ENCODE measurements at regions of chr18 and their contacts with region 1.

Region 1: DNA sequence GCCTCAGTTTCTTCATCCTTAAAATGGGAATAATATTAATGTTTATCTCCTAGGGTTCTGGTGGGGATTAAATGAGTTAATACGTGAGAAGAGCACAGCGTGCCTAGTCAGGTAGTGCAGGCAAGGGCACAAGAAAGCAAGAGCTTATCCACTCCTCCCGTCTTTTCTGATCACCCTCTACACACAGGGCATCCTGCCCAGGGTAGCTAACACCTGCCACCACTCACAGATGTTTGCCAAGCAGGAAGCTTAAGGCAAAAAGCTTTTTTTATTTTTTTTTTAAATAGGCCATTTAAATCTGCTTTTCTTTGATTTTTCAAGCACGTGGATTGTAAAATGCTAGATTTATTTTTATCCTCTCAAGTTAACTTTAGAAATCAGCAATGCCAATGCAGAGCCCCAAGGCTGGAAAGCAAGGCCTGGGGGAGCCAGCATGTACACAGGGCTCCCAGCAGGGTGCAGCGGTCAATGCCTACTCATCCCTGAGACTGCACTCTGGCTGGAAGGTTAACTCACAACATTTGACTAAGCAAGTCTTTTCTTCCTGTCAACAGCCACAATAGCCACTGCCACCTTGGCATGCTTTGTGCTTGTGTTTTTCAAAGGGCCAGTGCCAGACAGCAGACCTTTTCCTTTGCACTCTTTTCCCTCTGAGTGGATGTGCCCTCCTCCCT is 86.5 kb upstream of the ACAA2 start:
- DNase-seq: no peak

Region 2: DNA sequence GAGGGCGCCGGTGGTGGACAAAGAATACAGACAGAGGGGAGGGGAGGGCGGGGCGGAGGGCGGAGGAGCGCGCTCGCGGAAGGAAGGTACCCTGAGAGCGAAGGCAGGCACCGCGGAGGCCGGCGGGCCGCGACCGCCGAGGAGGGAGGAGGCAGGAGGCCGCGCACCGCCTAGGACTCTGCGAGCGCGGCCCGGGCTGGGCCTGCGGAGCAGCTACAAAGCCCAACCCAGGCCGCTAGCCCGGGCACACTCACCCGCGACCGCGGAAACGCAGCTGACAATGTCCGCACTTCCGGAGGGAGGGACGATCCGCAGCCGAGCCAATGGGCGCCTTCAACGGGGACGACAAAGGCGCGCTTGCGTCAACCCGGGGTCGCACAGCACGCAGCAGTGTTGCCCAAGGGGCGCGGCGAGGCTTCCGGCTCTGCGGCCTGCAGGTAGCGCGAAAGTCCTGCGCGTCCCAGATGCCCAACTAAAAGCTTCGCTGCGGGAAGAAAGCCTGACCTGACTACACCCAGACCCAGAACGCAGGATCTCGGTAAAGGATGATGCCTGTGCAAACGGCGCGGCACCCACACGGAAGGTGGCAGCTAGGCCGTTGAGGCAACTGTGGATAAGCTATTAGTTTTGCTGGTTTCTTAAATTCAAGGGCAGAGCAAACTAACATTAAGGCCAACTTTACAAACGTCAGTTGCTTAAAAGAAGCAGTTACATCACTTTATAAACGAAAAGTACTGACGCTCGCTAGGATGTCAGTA is 412.7 kb before region 1 on chr18 and contains the start of gene C18orf32:
- intact Hi-C with region 1: no loop called
- DNase-seq: peak; percentile 99
- total RNA-seq, gene C18orf32: 58.8 to 60.7 TPM

Region 3: DNA sequence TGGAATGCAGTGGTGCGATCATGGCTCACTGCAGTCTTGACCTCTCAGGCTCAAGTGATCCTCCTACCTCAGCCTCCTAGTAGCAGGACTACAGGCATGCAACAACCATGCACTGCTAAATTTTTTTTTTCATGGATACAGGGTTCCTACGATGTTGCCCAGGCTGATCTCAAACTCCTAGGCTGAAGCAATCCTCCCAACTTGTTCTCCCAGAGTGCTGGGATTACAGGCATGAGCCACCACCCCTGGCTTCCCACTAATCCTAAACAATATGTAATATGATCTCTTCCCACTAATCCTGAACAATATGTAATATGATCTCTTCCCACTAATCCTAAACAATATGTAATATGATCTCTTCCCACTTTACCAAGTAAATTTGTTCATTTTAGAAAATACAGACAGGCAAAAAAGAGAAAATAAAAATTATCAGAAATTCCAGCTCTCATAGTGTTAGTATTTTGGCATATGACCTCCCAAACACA is 379.1 kb before region 1 on chr18:
- intact Hi-C with region 1: no loop called
- DNase-seq: no peak

Region 4: GRCh38 chr18:50158923-50159653 is 259.3 kb after region 1 on chr18:
- intact Hi-C with region 1: no loop called
- DNase-seq: no peak

Region 5: DNA sequence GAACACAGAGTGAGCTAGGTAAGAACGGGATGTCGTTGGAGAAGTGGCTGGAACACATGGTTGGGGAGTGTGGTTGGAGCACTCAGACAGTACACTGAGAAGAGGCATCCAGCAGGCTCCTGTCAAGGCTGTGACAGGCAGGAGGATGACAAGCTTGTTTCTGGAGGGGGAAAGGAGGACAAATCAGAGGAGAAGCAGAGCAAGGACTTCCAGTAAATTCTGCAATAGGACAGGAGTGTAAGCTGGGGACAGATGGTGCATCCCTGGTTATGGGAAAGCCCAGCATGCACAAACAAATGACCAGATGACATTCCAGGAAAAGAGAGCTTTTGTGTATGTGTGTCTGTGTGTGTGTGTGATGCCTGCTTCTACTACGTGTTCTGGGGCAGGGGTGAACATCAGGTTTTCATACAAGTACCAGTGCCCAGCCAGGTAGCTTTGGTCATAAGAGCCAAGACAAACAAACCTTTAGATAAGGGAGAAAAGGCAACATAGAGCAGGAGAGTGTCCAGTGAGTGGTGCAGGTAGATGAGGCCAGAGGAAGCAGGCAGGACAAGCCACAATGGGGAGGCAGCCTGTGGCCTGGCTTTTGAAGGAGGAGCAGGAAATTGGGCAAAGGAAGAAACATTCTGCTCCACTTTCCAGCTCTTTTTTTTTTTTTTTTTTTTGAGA is 628.0 kb after region 1 on chr18:
- intact Hi-C with region 1: loop called in 1 of 2 experiments (anchors 5 kb)
- DNase-seq: no peak